ENCODE measurements at regions of chr15 and their contacts with region 1.

Region 1: DNA sequence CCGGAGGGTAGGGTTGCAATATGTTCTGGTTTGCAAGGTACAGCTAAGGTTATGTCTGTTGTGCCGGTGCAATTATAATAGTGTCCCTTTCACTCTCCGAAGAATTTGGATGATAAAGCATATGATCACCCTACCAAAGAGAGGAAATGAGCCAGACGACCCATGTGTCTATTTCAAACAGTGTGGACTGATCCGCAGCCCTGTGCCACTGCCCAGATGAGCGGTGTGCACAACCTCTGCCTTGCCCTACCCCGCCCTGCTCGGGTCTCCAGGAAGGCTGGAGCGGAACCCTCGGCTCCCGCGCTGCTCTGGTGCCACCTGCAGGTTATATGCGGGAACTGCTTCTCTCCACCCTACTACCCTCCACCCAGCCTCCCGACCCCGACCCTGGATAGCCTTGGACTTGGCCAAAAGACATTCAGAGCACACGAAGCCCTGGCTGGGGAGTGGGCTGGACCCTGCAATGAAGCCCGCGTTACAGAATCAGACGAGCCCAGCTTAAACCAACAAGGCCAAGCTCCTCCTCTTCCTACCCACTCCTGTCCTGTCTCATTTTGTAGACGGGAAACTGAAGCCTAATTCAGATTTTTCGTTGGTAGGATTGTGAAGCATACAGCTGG is 68.4 kb upstream of the CHRNB4 start:
- DNase-seq: peak; percentile 62
- H3K4me3 ChIP-seq: no peak overlapping the region
- H3K27ac ChIP-seq: no peak overlapping the region
- H3K4me1 ChIP-seq: peaks cover 8% of the 10 kb centered on the region
- H3K27me3 ChIP-seq: peaks cover 25% of the 10 kb centered on the region
- CTCF ChIP-seq: peak; percentile 91

Region 2: GRCh38 chr15:78618490-78618934 is 90.9 kb before region 1 on chr15:
- intact Hi-C with region 1: loop called (anchors 5 kb)
- DNase-seq: peak; percentile 77
- H3K4me3 ChIP-seq: no peak overlapping the region
- H3K27ac ChIP-seq: no peak overlapping the region
- H3K4me1 ChIP-seq: peaks cover 24% of the 10 kb centered on the region
- H3K27me3 ChIP-seq: peaks cover 51% of the 10 kb centered on the region
- CTCF ChIP-seq: peak; percentile 88

Region 3: GRCh38 chr15:78640840-78641719 is 68.3 kb before region 1 on chr15 and contains the start of gene CHRNB4:
- intact Hi-C with region 1: loop called (anchors 10 kb)
- DNase-seq: no peak
- H3K4me3 ChIP-seq: peak within 1 kb of the TSS; percentile 61
- H3K27ac ChIP-seq: no peak within 1 kb of the TSS
- H3K4me1 ChIP-seq: peaks cover 20% of the 10 kb centered on the region
- H3K27me3 ChIP-seq: peaks cover 41% of the 10 kb centered on the region
- CTCF ChIP-seq: no peak
- total RNA-seq, gene CHRNB4: not detected

Measured in left ventricle myocardium inferior (tissue), 1 donor.